Endothelial cell of umbilical vein (primary cell): ENCODE measurements at regions of chr10 and their contacts with region 1.

Region 1: GRCh38 chr10:82969405-82969804 is 1094.4 kb downstream of the NRG3 start:
- DNase-seq: peak; percentile 29
- H3K4me3 ChIP-seq: no peak overlapping the region
- H3K27ac ChIP-seq: no peak overlapping the region
- H3K4me1 ChIP-seq: no peaks in the 10 kb centered on the region
- H3K27me3 ChIP-seq: no peaks in the 10 kb centered on the region
- CTCF ChIP-seq: peak in 1 of 2 donors; percentile 22
- POLR2A ChIP-seq: no peak

Region 2: GRCh38 chr10:82811621-82812020 is 157.8 kb before region 1 on chr10:
- CTCF ChIA-PET with region 1: interaction called, 17 read pairs
- POLR2A ChIA-PET with region 1: no interaction called
- dilution Hi-C with region 1: no loop called
- intact Hi-C with region 1: loop called (anchors 2 kb)
- DNase-seq: peak; percentile 21
- H3K4me3 ChIP-seq: no peak overlapping the region
- H3K27ac ChIP-seq: no peak overlapping the region
- H3K4me1 ChIP-seq: no peaks in the 10 kb centered on the region
- H3K27me3 ChIP-seq: no peaks in the 10 kb centered on the region
- CTCF ChIP-seq: peak; percentile 52 to 60
- POLR2A ChIP-seq: no peak

Region 3: GRCh38 chr10:83037653-83038052 is 68.2 kb after region 1 on chr10:
- CTCF ChIA-PET with region 1: no interaction called
- POLR2A ChIA-PET with region 1: no interaction called
- dilution Hi-C with region 1: no loop called
- intact Hi-C with region 1: no loop called
- DNase-seq: no peak
- H3K4me3 ChIP-seq: no peak overlapping the region
- H3K27ac ChIP-seq: no peak overlapping the region
- H3K4me1 ChIP-seq: no peaks in the 10 kb centered on the region
- H3K27me3 ChIP-seq: no peaks in the 10 kb centered on the region
- CTCF ChIP-seq: no peak
- POLR2A ChIP-seq: no peak